ENCODE measurements at regions of chr2 and their contacts with region 1.

Region 1: GRCh38 chr2:73284296-73285158 is at the start of gene FBXO41:
- DNase-seq: peak; percentile 43 to 79 (median 61)
- ATAC-seq: peak; percentile 81
- H3K4me3 ChIP-seq: peak within 1 kb of the TSS; percentile 69
- H3K4me3 Mint-ChIP-seq: peak within 1 kb of the TSS; percentile 72 to 91 (median 85)
- H3K27ac ChIP-seq: peak within 1 kb of the TSS; percentile 61
- H3K27ac Mint-ChIP-seq: peak within 1 kb of the TSS in 7 of 9 donors; percentile 32 to 87 (median 58)
- H3K4me1 ChIP-seq: peaks cover 12 to 14% of the 10 kb centered on the region in 2 donors
- H3K4me1 Mint-ChIP-seq: peaks cover 6 to 26% (median 19%) of the 10 kb centered on the region in 7 donors
- H3K27me3 ChIP-seq: no peaks in the 10 kb centered on the region
- H3K27me3 Mint-ChIP-seq: peaks cover 0 to 34% (median 14%) of the 10 kb centered on the region in 5 donors
- total RNA-seq, gene FBXO41: 13.2 to 19.6 (median 17.6) TPM

Region 2: DNA sequence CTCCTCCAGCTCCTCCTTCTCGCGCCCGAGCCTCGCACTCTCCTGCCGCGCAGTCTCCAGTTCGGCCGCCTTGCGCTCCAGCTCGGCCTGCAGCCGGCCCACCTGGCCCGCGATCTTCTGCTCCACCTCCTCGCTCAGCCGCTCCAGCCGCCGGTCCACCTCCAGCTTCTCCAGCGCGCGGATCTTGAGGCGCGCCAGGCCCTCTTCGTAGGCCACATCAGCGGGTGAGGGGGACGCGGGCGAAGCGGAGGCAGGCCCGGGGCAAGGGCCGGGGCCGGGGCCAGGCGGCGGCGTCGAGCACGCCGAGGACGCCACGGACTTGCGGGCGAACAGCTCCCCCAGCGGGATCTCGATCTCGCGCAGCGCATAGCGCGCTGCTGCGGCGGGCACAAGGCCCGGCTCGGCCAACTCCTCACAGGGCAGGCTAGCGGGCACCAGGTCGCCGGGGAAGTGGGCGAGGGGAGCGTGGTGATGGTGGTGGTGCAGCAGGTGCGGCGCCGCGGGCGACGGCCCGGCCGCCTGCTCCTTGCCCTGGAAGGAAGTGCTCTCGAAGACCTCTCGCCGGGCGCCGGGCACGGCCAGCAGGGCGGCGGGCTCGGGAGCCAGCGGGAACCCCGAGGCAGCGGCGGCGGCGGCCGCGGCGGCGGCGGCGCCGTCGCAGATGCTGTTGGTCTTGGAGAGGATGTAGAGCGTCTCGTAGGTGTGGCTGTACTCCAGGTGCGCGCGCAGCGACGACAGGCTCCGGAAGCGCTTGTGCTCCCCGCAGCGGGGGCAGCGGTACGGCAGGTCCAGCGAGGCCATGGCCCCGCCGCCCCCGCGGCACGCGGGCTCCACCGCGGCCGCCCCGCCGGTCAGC is 15.5 kb before region 1 on chr2:
- CTCF ChIA-PET with region 1: no interaction called
- POLR2A ChIA-PET with region 1: interaction called, 3 read pairs
- intact Hi-C with region 1: loop called (anchors 1 kb)
- DNase-seq: peak; percentile 62 to 81 (median 76)
- ATAC-seq: peak; percentile 91
- H3K4me3 ChIP-seq: peak overlapping the region; percentile 35
- H3K4me3 Mint-ChIP-seq: peak overlapping the region in 9 of 10 donors; percentile 32 to 78 (median 64)
- H3K27ac ChIP-seq: peak overlapping the region; percentile 62
- H3K27ac Mint-ChIP-seq: peak overlapping the region in 4 of 9 donors; percentile 29 to 81 (median 56)
- H3K4me1 ChIP-seq: peaks cover 0 to 12% of the 10 kb centered on the region in 2 donors
- H3K4me1 Mint-ChIP-seq: peaks cover 23 to 34% (median 26%) of the 10 kb centered on the region in 7 donors
- H3K27me3 ChIP-seq: no peaks in the 10 kb centered on the region
- H3K27me3 Mint-ChIP-seq: no peaks in the 10 kb centered on the region

Measured in naive thymus-derived CD4-positive, alpha-beta T cell (primary cell).